GM12878 (cell line): ENCODE measurements at regions of chr5 and their contacts with region 1.

Region 1: DNA sequence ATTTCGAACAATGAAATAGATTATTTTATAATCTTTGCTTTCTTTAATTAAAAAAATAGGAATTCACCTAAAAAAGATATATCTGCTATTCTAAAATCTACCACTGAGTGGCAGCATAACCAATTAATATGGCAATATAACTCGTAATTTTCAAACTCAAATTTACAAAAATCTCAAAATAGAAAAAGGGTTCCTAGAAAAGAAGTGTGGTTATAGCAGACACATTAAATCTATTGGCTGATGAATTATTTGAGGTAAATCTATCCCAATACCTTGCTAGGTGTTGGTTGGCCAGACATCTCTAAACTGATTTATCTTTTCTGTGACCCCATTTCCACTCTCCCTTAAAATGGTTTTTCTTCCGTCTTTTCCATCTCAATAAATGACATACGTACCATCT is 30.2 kb upstream of the NRG2 start:
- DNase-seq: no peak
- ATAC-seq: no peak
- H3K4me3 ChIP-seq: no peak overlapping the region
- H3K27ac ChIP-seq: no peak overlapping the region
- H3K4me1 ChIP-seq: no peaks in the 10 kb centered on the region
- H3K27me3 ChIP-seq: peaks cover 0 to 3% of the 10 kb centered on the region in 2 experiments; a peak in 1 of 4 replicates
- CTCF ChIP-seq: peak in 2 of 3 experiments; percentile 28 to 34; a peak in 2 of 6 replicates
- EP300 ChIP-seq: no peak
- POLR2A ChIP-seq: no peak
- RAD21 ChIP-seq: peak; percentile 51

Region 2: GRCh38 chr5:140084541-140084940 is 11.2 kb after region 1 on chr5:
- CTCF ChIA-PET with region 1: interaction called, 15 read pairs
- POLR2A ChIA-PET with region 1: no interaction called
- RAD21 ChIA-PET with region 1: interaction called, 5 read pairs
- SMC1A ChIA-PET with region 1: interaction called, 18 read pairs
- in situ Hi-C with region 1: no loop called
- intact Hi-C with region 1: no loop called
- DNase-seq: no peak
- ATAC-seq: peak; percentile 19; the same call in 1 of the 3 replicates
- H3K4me3 ChIP-seq: no peak overlapping the region
- H3K27ac ChIP-seq: no peak overlapping the region
- H3K4me1 ChIP-seq: no peaks in the 10 kb centered on the region
- H3K27me3 ChIP-seq: peaks cover 0 to 7% of the 10 kb centered on the region in 2 experiments
- CTCF ChIP-seq: no peak
- EP300 ChIP-seq: no peak
- POLR2A ChIP-seq: no peak
- RAD21 ChIP-seq: no peak

Region 3: DNA sequence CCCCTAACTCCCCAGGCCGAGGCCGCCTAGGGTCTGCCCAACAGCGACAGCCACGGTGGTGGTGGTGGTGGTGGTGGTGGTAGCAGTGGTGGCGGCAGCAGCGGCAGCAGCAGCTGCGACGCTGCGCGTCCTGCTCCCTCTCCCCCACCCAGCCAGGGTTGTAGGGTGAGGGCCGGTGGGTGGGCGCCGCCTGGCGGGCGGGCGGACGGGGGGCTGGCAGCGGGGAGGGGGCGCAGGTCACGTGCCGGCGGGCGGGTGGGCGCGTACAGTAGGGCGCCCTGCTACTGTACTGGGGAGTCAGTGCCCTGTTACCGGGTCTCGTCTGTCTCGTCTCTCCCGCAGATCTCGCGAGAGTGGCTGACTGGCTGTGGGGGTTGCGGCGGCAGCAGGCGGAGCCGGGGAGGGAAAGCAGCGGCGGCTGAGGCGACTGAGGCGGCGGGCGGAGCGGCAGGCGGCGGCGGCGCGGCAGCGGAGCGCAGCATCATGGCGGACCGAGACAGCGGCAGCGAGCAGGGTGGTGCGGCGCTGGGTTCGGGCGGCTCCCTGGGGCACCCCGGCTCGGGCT is 40.5 kb after region 1 on chr5 and contains the start of gene PURA:
- CTCF ChIA-PET with region 1: interaction called, 14 read pairs
- POLR2A ChIA-PET with region 1: interaction called, 5 read pairs
- RAD21 ChIA-PET with region 1: interaction called, 10 read pairs
- SMC1A ChIA-PET with region 1: interaction called, 22 read pairs
- in situ Hi-C with region 1: no loop called
- intact Hi-C with region 1: no loop called
- DNase-seq: peak; percentile 82
- ATAC-seq: peak; percentile 85
- H3K4me3 ChIP-seq: peak within 1 kb of the TSS; percentile 93
- H3K27ac ChIP-seq: peak within 1 kb of the TSS; percentile 83
- H3K4me1 ChIP-seq: peaks cover 19% of the 10 kb centered on the region
- H3K27me3 ChIP-seq: no peaks in the 10 kb centered on the region
- CTCF ChIP-seq: peak in 2 of 3 experiments; percentile 14 to 23; a peak in 2 of 6 replicates
- EP300 ChIP-seq: no peak
- POLR2A ChIP-seq: peak; percentile 86
- RAD21 ChIP-seq: no peak; the same call in 1 of the 2 replicates
- polyA plus RNA-seq, gene PURA: 3.7 to 4.1 TPM

Region 4: DNA sequence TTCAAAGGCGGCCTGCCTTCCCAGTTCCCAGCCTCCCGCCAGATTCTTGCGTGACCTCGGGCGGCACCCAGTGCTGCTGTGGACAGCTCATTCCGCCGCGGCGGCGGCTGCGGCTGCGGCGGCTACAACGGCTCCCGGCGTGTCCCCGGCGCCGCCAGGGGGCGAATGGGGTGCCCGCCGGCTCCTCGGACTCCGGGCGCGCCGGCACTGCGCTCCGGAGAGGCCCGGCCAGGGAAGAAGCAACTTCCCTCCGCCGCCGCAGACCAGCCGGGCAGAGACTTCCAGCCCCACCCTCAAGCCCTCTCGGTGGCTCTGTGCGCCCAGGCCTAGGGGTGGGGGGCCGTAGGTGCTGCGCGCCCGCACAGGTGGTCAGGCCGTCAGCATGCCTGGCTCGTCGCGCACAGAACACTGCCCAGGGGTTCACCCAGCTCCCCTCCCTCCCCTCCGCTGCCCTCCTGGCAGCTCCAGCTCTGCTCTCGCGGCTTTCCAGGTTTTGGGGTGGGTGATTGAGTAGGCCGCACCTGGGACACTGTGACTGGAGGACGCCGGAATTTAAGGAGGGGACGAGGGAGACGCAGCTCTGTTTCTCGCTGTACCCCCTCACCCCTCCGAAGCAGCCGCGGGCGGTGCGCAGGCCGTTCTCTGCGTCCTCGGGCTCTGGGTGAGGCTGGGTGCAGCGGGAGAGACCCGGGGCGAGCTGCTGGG is 72.7 kb after region 1 on chr5:
- CTCF ChIA-PET with region 1: interaction called, 353 read pairs
- POLR2A ChIA-PET with region 1: interaction called, 3 read pairs
- RAD21 ChIA-PET with region 1: interaction called, 64 read pairs
- SMC1A ChIA-PET with region 1: interaction called, 66 read pairs
- in situ Hi-C with region 1: no loop called
- intact Hi-C with region 1: loop called (anchors 1 kb)
- DNase-seq: no peak
- ATAC-seq: peak; percentile 91
- H3K4me3 ChIP-seq: peak overlapping the region; percentile 23; the same call in 1 of the 2 replicates
- H3K27ac ChIP-seq: no peak overlapping the region
- H3K4me1 ChIP-seq: peaks cover 6% of the 10 kb centered on the region; the same call in 1 of the 2 replicates
- H3K27me3 ChIP-seq: peaks cover 6% of the 10 kb centered on the region in 2 experiments; a peak in 3 of 4 replicates
- CTCF ChIP-seq: peak; percentile 51 to 58 (median 57); a peak in 5 of 6 replicates
- EP300 ChIP-seq: no peak
- POLR2A ChIP-seq: no peak
- RAD21 ChIP-seq: 0 out of 2 replicates have a peak, but pooled peaks have one; percentile 6